Activated naive CD4-positive, alpha-beta T cell treated with anti-CD3 and anti-CD28 coated beads for 36 hours (primary cell): ENCODE measurements at regions of chr12 and their contacts with region 1.

Region 1: DNA sequence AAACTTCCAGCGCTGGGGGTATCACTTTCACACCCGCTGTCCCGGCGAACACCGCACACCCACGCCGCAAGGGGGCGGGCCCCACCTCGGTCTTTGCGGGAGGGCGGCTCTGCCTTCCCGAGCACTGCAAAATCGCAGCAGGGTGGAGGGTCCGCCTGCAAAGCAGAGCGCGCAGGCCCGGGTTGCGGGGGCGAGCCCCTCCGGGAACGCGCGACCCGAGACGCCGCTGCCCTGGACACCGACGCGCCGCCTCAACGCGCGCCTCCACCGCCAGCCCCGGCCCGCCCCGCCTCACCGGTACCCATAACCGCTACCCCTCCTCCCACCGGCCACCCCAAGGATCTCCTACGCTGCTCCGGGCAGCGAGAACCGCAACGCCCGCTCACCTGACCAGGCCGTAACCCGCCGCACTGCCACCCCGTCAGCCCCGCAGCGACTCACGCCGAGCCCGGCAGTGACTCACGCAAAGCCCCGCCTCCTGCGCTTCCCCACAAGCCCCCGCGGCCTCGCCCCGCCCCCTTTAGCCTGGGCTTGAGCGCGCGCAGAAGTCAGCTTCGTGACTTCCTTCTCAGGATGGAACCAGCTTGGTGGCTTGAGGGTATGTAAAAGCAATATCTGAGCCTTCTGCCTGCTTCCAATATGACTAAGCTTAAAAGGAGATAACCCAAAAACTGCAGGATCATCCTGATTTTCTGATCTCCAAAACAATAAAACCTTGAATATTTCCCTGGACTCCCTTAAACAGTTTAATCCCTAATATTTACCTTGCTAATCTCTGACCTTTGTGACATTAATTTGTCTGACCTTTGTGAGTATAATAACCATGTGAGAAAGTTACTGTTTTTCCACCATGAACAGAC is at the start of gene RPAP3:
- DNase-seq: peak; percentile 99
- H3K4me3 Mint-ChIP-seq: peak within 1 kb of the TSS; percentile 93
- H3K27ac Mint-ChIP-seq: peak within 1 kb of the TSS; percentile 98
- H3K4me1 Mint-ChIP-seq: peaks cover 49% of the 10 kb centered on the region
- H3K27me3 Mint-ChIP-seq: no peaks in the 10 kb centered on the region
- total RNA-seq, gene RPAP3: 46.2 to 46.7 TPM

Region 2: GRCh38 chr12:47079468-47079980 is 626.3 kb before region 1 on chr12 and contains the starts of genes AMIGO2 and PCED1B:
- CTCF ChIA-PET with region 1: no interaction called
- intact Hi-C with region 1: loop called (anchors 5 kb)
- DNase-seq: peak; percentile 88
- H3K4me3 Mint-ChIP-seq: peak within 1 kb of the TSS; percentile 95
- H3K27ac Mint-ChIP-seq: peak within 1 kb of the TSS; percentile 94
- H3K4me1 Mint-ChIP-seq: peaks cover 69% of the 10 kb centered on the region
- H3K27me3 Mint-ChIP-seq: no peaks in the 10 kb centered on the region
- total RNA-seq, gene AMIGO2: 19.2 to 19.6 TPM
- total RNA-seq, gene PCED1B: 138 to 143 TPM

Region 3: DNA sequence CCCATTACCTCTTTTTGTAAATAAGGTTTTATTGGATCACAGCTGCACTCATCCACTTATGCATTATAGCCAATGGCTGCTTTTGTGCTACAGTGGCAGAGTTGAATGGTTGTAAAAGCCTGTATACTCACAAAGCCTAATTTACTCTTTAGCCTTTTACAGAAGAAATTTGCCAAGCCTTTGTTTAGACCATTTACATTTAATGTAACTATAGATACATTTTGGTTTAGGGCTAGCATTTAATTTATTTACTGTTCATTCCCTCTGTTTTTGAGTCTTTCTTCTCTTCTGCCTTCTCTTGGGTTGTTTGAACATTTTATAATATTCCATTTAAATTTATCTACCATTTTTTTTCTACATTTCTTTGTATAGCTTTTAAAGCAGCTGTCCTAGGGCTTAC is 409.0 kb before region 1 on chr12:
- CTCF ChIA-PET with region 1: no interaction called
- intact Hi-C with region 1: no loop called
- DNase-seq: no peak
- H3K4me3 Mint-ChIP-seq: no peak overlapping the region
- H3K27ac Mint-ChIP-seq: no peak overlapping the region
- H3K4me1 Mint-ChIP-seq: peaks cover 46% of the 10 kb centered on the region
- H3K27me3 Mint-ChIP-seq: no peaks in the 10 kb centered on the region

Region 4: DNA sequence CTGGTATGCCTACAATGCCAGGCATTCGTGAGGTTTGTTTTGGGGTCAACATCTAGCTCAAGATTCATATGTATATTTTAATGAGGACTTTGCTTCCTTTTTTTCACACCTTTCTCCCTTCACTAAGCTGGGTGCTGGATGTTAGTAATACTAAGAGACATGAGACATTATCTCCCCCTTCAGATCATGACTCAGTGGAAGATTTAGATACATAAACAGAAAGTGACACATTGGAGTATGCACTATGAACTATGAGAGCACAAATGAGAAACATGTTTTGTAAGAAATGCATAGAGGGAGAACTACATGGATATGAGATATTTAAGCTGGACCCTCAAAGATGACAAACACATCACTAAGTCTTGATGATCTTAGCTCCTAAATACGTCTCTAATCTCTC is 286.3 kb before region 1 on chr12:
- CTCF ChIA-PET with region 1: no interaction called
- intact Hi-C with region 1: loop called (anchors 2 kb)
- DNase-seq: no peak
- H3K4me3 Mint-ChIP-seq: no peak overlapping the region
- H3K27ac Mint-ChIP-seq: peak overlapping the region; percentile 83
- H3K4me1 Mint-ChIP-seq: peaks cover 51% of the 10 kb centered on the region
- H3K27me3 Mint-ChIP-seq: no peaks in the 10 kb centered on the region

Region 5: GRCh38 chr12:47679785-47680184 is 26.0 kb before region 1 on chr12:
- CTCF ChIA-PET with region 1: no interaction called
- intact Hi-C with region 1: no loop called
- DNase-seq: no peak
- H3K4me3 Mint-ChIP-seq: no peak overlapping the region
- H3K27ac Mint-ChIP-seq: no peak overlapping the region
- H3K4me1 Mint-ChIP-seq: peaks cover 24% of the 10 kb centered on the region
- H3K27me3 Mint-ChIP-seq: no peaks in the 10 kb centered on the region

Region 6: DNA sequence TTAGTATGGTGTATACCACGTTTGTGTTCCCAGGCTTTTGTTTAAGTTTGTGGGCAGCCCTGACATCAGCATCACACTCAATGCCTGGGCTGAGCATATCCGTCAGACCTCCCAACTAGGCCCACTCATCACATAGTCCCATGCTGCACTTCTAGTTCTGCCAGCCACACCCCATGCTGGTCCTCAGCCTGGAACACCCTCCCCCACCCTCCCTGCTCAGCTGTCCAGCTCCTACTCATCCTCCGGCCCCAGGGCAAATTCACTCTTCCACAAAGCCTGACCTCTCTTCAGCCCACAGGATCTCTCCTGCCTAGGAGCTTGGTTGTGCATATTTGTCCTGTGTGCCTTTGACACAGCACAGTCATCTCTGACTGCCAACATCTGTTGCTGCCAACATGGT is 23.4 kb after region 1 on chr12:
- CTCF ChIA-PET with region 1: no interaction called
- intact Hi-C with region 1: no loop called
- DNase-seq: no peak
- H3K4me3 Mint-ChIP-seq: no peak overlapping the region
- H3K27ac Mint-ChIP-seq: no peak overlapping the region
- H3K4me1 Mint-ChIP-seq: peaks cover 11% of the 10 kb centered on the region
- H3K27me3 Mint-ChIP-seq: no peaks in the 10 kb centered on the region

Region 7: DNA sequence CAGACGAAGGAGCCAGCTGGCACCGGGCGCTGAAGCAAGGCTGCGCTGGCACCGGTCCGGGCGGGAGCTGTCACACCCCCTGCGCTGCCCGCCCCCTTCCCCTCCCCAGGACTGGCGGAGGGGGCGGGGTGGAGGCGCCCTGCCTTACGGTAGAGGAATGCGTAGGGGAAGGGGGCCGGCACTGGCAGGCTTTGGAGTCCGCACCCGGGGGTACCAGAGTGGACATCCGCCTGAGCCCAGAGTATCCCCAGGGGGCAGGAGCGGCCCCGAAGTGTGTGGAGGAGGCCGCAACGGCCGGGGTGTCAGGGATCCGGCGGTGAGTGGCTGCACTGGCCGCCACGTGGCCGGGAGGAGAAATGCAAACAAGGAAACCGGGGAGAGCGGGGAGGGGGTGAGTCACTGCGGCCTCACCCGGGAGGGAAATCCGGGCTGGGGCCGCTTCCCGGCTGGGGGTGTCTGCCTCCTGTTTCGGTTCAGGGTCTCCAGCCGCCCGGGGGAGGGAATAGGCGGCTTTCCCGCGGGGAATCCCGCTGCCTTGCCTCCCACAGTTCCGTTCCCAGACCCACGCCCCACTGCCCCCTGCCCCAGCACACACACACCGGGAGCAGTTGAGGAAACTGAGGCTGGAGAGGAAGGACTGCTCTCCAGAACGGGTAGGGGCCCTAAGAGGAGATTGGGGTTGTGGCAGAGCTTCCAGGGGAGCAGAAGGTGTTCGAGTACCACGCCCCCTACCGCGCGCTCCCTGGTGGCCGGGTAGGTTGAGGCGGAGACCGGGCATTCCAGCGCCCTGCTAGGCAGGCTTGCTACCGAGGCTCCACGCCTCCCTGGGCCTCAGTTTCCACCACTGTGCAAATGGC is 53.3 kb after region 1 on chr12 and contains the start of gene RAPGEF3:
- CTCF ChIA-PET with region 1: interaction called, 3 read pairs
- intact Hi-C with region 1: loop called (anchors 1 kb)
- DNase-seq: peak; percentile 86
- H3K4me3 Mint-ChIP-seq: peak within 1 kb of the TSS; percentile 65
- H3K27ac Mint-ChIP-seq: no peak within 1 kb of the TSS
- H3K4me1 Mint-ChIP-seq: peaks cover 24% of the 10 kb centered on the region
- H3K27me3 Mint-ChIP-seq: no peaks in the 10 kb centered on the region
- total RNA-seq, gene RAPGEF3: 1.5 to 1.6 TPM

Region 8: GRCh38 chr12:47828608-47829536 is 123.1 kb after region 1 on chr12:
- CTCF ChIA-PET with region 1: interaction called, 3 read pairs
- intact Hi-C with region 1: loop called (anchors 1 kb)
- DNase-seq: peak; percentile 63
- H3K4me3 Mint-ChIP-seq: peak overlapping the region; percentile 63
- H3K27ac Mint-ChIP-seq: peak overlapping the region; percentile 86
- H3K4me1 Mint-ChIP-seq: peaks cover 86% of the 10 kb centered on the region
- H3K27me3 Mint-ChIP-seq: no peaks in the 10 kb centered on the region

Region 9: GRCh38 chr12:47891356-47891755 is 185.6 kb after region 1 on chr12:
- CTCF ChIA-PET with region 1: no interaction called
- intact Hi-C with region 1: no loop called
- DNase-seq: no peak
- H3K4me3 Mint-ChIP-seq: no peak overlapping the region
- H3K27ac Mint-ChIP-seq: no peak overlapping the region
- H3K4me1 Mint-ChIP-seq: peaks cover 64% of the 10 kb centered on the region
- H3K27me3 Mint-ChIP-seq: no peaks in the 10 kb centered on the region

Region 10: DNA sequence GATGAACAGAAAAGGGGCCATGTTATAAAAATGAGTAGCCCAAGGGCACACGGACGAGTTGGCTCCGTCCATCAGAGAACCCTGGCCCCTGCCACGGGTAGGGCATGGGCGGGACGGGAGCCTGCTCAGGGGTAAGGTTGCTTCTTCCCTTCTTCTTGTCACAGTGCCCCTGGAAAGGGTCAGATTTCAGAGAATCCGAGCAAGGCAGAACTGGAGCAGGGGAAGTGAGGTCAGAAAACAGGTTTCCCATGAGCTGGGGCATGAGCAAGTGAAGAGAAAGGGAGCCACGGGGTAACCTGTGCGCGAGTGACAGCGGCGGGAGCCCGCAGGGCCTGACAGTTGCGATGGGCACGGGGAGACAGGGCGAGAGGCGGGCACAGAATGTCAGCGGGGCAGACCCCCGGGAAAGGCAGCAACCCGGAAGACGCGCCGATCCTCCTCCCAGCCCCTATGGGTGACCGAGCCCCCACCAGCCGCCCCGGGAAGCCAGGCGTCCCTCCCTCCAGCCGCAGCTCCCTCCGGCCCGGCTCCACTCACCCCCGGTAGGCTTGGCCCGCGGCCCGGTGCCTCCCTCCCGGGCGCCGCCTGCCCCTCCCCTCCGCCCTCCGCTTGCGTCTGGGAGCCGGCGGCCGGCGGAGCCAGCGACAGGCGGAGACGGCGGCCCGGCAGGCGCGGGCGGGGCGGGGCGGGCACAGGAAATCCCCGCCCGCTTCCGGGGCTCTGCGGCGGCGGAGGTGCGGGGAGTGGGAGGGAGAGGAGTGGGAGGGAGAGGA is 644.6 kb after region 1 on chr12 and contains the start of gene ZNF641:
- CTCF ChIA-PET with region 1: no interaction called
- intact Hi-C with region 1: loop called (anchors 2 kb)
- DNase-seq: peak; percentile 79
- H3K4me3 Mint-ChIP-seq: peak within 1 kb of the TSS; percentile 91
- H3K27ac Mint-ChIP-seq: peak within 1 kb of the TSS; percentile 81
- H3K4me1 Mint-ChIP-seq: peaks cover 24% of the 10 kb centered on the region
- H3K27me3 Mint-ChIP-seq: no peaks in the 10 kb centered on the region
- total RNA-seq, gene ZNF641: 3.5 to 6.0 TPM